ENCODE measurements at regions of chr2 and their contacts with region 1.

Region 1: GRCh38 chr2:37890893-37891495 is 34.1 kb upstream of the RMDN2 start:
- DNase-seq: no peak
- ATAC-seq: peak; percentile 84
- H3K4me3 ChIP-seq: no peak overlapping the region
- H3K27ac ChIP-seq: no peak overlapping the region
- H3K4me1 ChIP-seq: peaks cover 43% of the 10 kb centered on the region
- H3K27me3 ChIP-seq: no peaks in the 10 kb centered on the region
- CTCF ChIP-seq: peak; percentile 73 to 84 (median 82)
- EP300 ChIP-seq: peak in 1 of 2 experiments; percentile 15; a peak in 1 of 4 replicates
- POLR2A ChIP-seq: no peak
- RAD21 ChIP-seq: peak; percentile 88

Region 2: GRCh38 chr2:37397166-37397565 is 493.8 kb before region 1 on chr2:
- CTCF ChIA-PET with region 1: interaction called, 64 read pairs
- POLR2A ChIA-PET with region 1: no interaction called
- RAD21 ChIA-PET with region 1: interaction called, 28 read pairs
- SMC1A ChIA-PET with region 1: interaction called, 18 read pairs
- in situ Hi-C with region 1: no loop called
- intact Hi-C with region 1: loop called (anchors 2 kb)
- DNase-seq: no peak
- ATAC-seq: no peak
- H3K4me3 ChIP-seq: no peak overlapping the region
- H3K27ac ChIP-seq: no peak overlapping the region
- H3K4me1 ChIP-seq: peaks cover 7% of the 10 kb centered on the region; the same call in 1 of the 2 replicates
- H3K27me3 ChIP-seq: no peaks in the 10 kb centered on the region
- CTCF ChIP-seq: no peak
- EP300 ChIP-seq: no peak
- POLR2A ChIP-seq: no peak
- RAD21 ChIP-seq: no peak

Region 3: GRCh38 chr2:37925063-37925897 is 34.3 kb after region 1 on chr2 and contains the start of gene RMDN2:
- CTCF ChIA-PET with region 1: interaction called, 4 read pairs
- POLR2A ChIA-PET with region 1: no interaction called
- RAD21 ChIA-PET with region 1: interaction called, 4 read pairs
- SMC1A ChIA-PET with region 1: interaction called, 5 read pairs
- in situ Hi-C with region 1: no loop called
- intact Hi-C with region 1: loop called (anchors 1 kb)
- DNase-seq: peak; percentile 42
- ATAC-seq: peak; percentile 96
- H3K4me3 ChIP-seq: peak within 1 kb of the TSS; percentile 73
- H3K27ac ChIP-seq: peak within 1 kb of the TSS; percentile 88
- H3K4me1 ChIP-seq: peaks cover 7% of the 10 kb centered on the region
- H3K27me3 ChIP-seq: no peaks in the 10 kb centered on the region
- CTCF ChIP-seq: no peak
- EP300 ChIP-seq: no peak
- POLR2A ChIP-seq: peak; percentile 87
- RAD21 ChIP-seq: 0 out of 2 replicates have a peak, but pooled peaks have one; percentile 10
- polyA plus RNA-seq, gene RMDN2: 6.6 to 9.1 TPM

Region 4: DNA sequence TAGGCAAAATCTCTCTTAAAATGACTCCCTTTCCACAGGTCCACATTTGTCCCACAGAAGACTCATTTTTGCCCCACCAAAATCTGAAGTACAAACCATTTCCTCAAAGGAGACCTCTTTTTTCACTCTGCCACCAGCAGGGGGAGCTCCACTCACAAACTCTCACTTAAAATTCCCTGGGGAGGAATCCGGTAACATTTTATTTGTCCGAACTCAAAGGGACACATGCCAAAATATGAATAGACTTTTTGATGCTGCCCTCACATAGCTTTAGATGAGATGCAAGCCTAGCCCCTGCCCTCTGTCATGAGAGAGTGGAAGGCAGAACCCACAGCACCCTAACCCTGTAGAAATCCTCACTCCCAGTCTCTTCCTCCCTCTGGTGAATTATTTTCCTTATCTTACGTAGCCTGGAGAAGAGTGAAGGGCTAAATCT is 91.2 kb after region 1 on chr2:
- CTCF ChIA-PET with region 1: no interaction called
- POLR2A ChIA-PET with region 1: no interaction called
- RAD21 ChIA-PET with region 1: interaction called, 3 read pairs
- SMC1A ChIA-PET with region 1: no interaction called
- in situ Hi-C with region 1: no loop called
- intact Hi-C with region 1: loop called (anchors 5 kb)
- DNase-seq: peak; percentile 30
- ATAC-seq: peak; percentile 61
- H3K4me3 ChIP-seq: no peak overlapping the region
- H3K27ac ChIP-seq: no peak overlapping the region
- H3K4me1 ChIP-seq: no peaks in the 10 kb centered on the region
- H3K27me3 ChIP-seq: no peaks in the 10 kb centered on the region
- CTCF ChIP-seq: peak; percentile 61 to 76 (median 70)
- EP300 ChIP-seq: no peak
- POLR2A ChIP-seq: no peak
- RAD21 ChIP-seq: peak; percentile 64

Region 5: DNA sequence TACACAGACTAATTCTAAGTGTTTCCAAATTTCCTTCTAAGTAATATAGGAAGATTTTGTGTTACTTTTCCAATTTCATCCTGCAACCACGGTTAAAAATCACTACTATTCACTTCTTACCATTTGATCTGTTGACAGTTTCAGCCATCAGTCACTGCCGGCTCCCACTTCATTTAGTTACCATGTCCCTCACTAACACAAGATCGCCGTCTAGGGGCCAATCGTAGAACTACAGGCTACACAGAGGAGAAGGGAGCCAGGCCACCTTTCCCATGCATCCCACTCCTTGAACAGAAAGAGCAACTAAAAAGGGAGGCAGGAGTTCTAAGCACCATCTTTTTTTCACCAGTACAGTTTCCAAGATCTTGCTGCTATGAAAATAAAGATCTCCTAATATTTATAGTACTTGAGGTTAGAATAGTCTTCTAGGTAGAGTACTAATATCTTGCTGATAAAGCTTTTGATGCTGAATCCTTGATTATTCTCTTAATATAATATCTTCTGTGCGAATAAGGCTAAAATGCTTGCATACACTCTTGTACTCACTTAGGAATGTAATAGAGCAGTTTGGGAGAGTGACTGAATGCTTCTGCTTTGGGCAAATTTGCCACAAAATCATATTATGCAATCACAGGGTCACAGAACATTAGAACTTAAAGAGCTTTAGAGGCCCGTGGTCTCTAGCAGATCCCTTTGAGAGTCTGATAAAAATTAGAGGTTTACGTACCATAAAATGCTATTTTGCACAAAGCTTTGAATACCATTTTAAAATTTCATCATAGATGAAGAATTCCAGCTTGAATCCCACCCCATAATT is 224.4 kb after region 1 on chr2:
- CTCF ChIA-PET with region 1: interaction called, 6 read pairs
- POLR2A ChIA-PET with region 1: interaction called, 4 read pairs
- RAD21 ChIA-PET with region 1: interaction called, 3 read pairs
- SMC1A ChIA-PET with region 1: interaction called, 4 read pairs
- in situ Hi-C with region 1: no loop called
- intact Hi-C with region 1: loop called (anchors 2 kb)
- DNase-seq: peak; percentile 55
- ATAC-seq: peak; percentile 96
- H3K4me3 ChIP-seq: no peak overlapping the region
- H3K27ac ChIP-seq: no peak overlapping the region; the same call in 1 of the 2 replicates
- H3K4me1 ChIP-seq: peaks cover 9% of the 10 kb centered on the region
- H3K27me3 ChIP-seq: no peaks in the 10 kb centered on the region
- CTCF ChIP-seq: peak; percentile 91 to 97 (median 96)
- EP300 ChIP-seq: no peak
- POLR2A ChIP-seq: no peak
- RAD21 ChIP-seq: peak; percentile 98

Region 6: DNA sequence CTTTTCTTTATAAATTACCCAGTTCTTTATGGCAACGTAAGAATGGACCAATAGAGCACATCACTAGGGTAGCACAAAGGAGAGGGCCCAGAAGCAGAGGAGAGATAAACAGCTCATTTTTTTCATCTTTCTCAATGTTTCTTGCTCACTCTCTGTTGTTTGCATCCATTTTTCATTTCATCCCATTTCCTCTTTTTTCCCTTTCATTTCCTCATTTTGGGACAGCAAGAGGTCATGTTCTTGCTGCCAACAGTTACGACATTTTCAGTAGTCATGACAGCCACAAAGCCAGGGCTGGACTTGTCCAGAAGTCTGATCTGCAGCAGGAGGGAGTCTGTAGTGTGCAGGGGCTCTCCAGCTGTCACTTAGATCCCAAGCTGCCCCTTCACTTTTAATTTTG is 237.7 kb after region 1 on chr2:
- CTCF ChIA-PET with region 1: no interaction called
- POLR2A ChIA-PET with region 1: no interaction called
- RAD21 ChIA-PET with region 1: no interaction called
- SMC1A ChIA-PET with region 1: no interaction called
- in situ Hi-C with region 1: no loop called
- intact Hi-C with region 1: no loop called
- DNase-seq: peak; percentile 48
- ATAC-seq: peak; percentile 82
- H3K4me3 ChIP-seq: no peak overlapping the region
- H3K27ac ChIP-seq: no peak overlapping the region
- H3K4me1 ChIP-seq: peaks cover 15% of the 10 kb centered on the region
- H3K27me3 ChIP-seq: no peaks in the 10 kb centered on the region
- CTCF ChIP-seq: no peak
- EP300 ChIP-seq: peak; percentile 45 to 63; a peak in 3 of 4 replicates
- POLR2A ChIP-seq: no peak
- RAD21 ChIP-seq: no peak